Endothelial cell of umbilical vein (primary cell): ENCODE measurements at regions of chr10 and their contacts with region 1.

Region 1: GRCh38 chr10:132939957-132940790 is 2.2 kb downstream of the CFAP46 start:
- DNase-seq: peak; percentile 30
- H3K4me3 ChIP-seq: no peak overlapping the region
- H3K27ac ChIP-seq: no peak overlapping the region
- H3K4me1 ChIP-seq: no peaks in the 10 kb centered on the region
- H3K27me3 ChIP-seq: no peaks in the 10 kb centered on the region
- CTCF ChIP-seq: peak; percentile 72 to 84
- POLR2A ChIP-seq: no peak

Region 2: GRCh38 chr10:132665946-132666704 is 274.0 kb before region 1 on chr10:
- CTCF ChIA-PET with region 1: no interaction called
- POLR2A ChIA-PET with region 1: no interaction called
- dilution Hi-C with region 1: no loop called
- intact Hi-C with region 1: loop called (anchors 5 kb)
- DNase-seq: peak; percentile 96
- H3K4me3 ChIP-seq: peak overlapping the region in 2 of 3 experiments; percentile 34 to 44
- H3K27ac ChIP-seq: peak overlapping the region; percentile 87
- H3K4me1 ChIP-seq: peaks cover 30% of the 10 kb centered on the region
- H3K27me3 ChIP-seq: no peaks in the 10 kb centered on the region
- CTCF ChIP-seq: no peak
- POLR2A ChIP-seq: no peak

Region 3: GRCh38 chr10:132817701-132818211 is 122.4 kb before region 1 on chr10:
- CTCF ChIA-PET with region 1: no interaction called
- POLR2A ChIA-PET with region 1: no interaction called
- dilution Hi-C with region 1: no loop called
- intact Hi-C with region 1: no loop called
- DNase-seq: no peak
- H3K4me3 ChIP-seq: no peak overlapping the region
- H3K27ac ChIP-seq: no peak overlapping the region
- H3K4me1 ChIP-seq: no peaks in the 10 kb centered on the region
- H3K27me3 ChIP-seq: no peaks in the 10 kb centered on the region
- CTCF ChIP-seq: no peak
- POLR2A ChIP-seq: no peak

Region 4: GRCh38 chr10:132961787-132962622 is 21.8 kb after region 1 on chr10:
- CTCF ChIA-PET with region 1: interaction called, 4 read pairs
- POLR2A ChIA-PET with region 1: no interaction called
- dilution Hi-C with region 1: no loop called
- intact Hi-C with region 1: loop called (anchors 1 kb)
- DNase-seq: peak; percentile 74
- H3K4me3 ChIP-seq: peak overlapping the region; percentile 49 to 64 (median 62)
- H3K27ac ChIP-seq: no peak overlapping the region
- H3K4me1 ChIP-seq: no peaks in the 10 kb centered on the region
- H3K27me3 ChIP-seq: peaks cover 2% of the 10 kb centered on the region in 2 experiments
- CTCF ChIP-seq: peak in 1 of 2 donors; percentile 1
- POLR2A ChIP-seq: no peak

Region 5: DNA sequence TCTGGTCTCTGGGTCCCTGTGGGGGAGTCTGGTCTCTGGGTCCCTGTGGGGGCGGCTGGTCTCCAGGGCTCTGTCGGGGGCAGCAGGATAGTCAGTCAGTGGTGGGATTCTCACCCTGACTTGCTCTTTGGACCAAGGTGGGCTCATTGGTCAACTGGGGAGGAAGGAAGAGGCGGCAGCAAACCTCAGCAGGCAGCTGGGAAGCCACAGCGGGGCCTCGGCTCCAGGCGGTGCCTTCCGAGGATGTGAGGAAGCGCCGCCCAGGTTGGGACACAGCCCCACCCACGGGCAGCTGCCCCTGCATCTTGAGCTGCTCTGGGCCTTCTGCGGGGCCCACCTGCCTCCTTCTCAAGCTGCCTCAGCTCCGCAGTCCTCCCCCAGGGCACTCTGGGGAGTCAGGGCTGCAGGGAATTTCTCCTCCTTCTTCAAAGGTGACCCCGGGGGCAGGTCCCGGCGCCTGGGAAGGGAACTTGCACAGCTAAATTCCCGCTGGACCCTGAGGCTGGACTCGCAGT is 199.4 kb after region 1 on chr10:
- CTCF ChIA-PET with region 1: no interaction called
- POLR2A ChIA-PET with region 1: no interaction called
- dilution Hi-C with region 1: no loop called
- intact Hi-C with region 1: loop called (anchors 5 kb)
- DNase-seq: no peak
- H3K4me3 ChIP-seq: no peak overlapping the region
- H3K27ac ChIP-seq: no peak overlapping the region
- H3K4me1 ChIP-seq: no peaks in the 10 kb centered on the region
- H3K27me3 ChIP-seq: no peaks in the 10 kb centered on the region
- CTCF ChIP-seq: no peak
- POLR2A ChIP-seq: no peak

Region 6: DNA sequence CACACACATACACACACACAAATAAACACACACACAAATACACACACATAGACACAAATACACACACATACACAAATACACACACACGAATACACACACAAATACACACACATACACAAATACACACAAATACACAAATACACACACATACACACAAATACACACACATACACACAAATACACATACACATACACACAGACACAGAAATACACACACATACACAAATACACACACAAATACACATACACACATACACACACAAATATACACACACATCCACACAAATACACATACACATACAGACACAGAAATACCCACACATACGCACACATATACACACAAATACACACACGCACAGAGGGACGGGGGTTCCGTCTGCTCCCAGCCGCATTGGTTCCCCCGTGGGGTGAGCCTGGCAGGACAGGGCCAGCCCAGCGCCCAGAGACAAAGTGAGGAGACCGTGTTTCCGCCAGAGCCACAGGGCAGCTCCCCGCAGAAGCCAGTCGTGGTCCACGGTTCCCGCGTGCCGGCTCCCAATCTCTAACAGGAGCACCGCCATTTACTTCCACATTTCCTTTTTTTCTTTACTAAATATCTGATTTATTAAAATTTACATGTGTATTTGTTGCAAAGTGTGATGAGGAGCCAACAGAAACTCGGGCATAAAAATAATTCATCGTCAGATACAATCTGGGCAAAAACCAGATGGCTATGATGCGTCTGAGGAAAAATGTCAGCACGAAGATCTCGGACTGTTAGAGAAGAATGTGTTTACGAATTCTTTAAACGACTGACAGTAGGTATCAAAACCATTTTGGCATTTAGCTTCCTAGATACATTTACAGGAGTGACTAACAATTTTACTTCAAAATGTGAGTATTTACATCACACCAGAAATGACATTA is 216.8 kb after region 1 on chr10:
- CTCF ChIA-PET with region 1: no interaction called
- POLR2A ChIA-PET with region 1: no interaction called
- dilution Hi-C with region 1: no loop called
- intact Hi-C with region 1: no loop called
- DNase-seq: no peak
- H3K4me3 ChIP-seq: no peak overlapping the region
- H3K27ac ChIP-seq: no peak overlapping the region
- H3K4me1 ChIP-seq: no peaks in the 10 kb centered on the region
- H3K27me3 ChIP-seq: peaks cover 3 to 12% of the 10 kb centered on the region in 2 experiments
- CTCF ChIP-seq: no peak
- POLR2A ChIP-seq: no peak